ENCODE measurements at regions of chr11 and their contacts with region 1.

Region 1: GRCh38 chr11:10307442-10308207 is 2.8 kb downstream of the ADM start:
- DNase-seq: peak; percentile 80 to 93
- ATAC-seq: peak; percentile 67 to 85 (median 81)
- H3K4me3 ChIP-seq: peak overlapping the region; percentile 44
- H3K4me3 Mint-ChIP-seq: peak overlapping the region; percentile 94
- H3K27ac ChIP-seq: no peak overlapping the region
- H3K27ac Mint-ChIP-seq: peak overlapping the region; percentile 66 to 81
- H3K4me1 ChIP-seq: peaks cover 54% of the 10 kb centered on the region
- H3K4me1 Mint-ChIP-seq: peaks cover 48 to 51% of the 10 kb centered on the region in 2 donors
- H3K27me3 ChIP-seq: peaks cover 37% of the 10 kb centered on the region
- H3K27me3 Mint-ChIP-seq: peaks cover 42% of the 10 kb centered on the region in 2 donors
- CTCF ChIP-seq: peak; percentile 99

Region 2: DNA sequence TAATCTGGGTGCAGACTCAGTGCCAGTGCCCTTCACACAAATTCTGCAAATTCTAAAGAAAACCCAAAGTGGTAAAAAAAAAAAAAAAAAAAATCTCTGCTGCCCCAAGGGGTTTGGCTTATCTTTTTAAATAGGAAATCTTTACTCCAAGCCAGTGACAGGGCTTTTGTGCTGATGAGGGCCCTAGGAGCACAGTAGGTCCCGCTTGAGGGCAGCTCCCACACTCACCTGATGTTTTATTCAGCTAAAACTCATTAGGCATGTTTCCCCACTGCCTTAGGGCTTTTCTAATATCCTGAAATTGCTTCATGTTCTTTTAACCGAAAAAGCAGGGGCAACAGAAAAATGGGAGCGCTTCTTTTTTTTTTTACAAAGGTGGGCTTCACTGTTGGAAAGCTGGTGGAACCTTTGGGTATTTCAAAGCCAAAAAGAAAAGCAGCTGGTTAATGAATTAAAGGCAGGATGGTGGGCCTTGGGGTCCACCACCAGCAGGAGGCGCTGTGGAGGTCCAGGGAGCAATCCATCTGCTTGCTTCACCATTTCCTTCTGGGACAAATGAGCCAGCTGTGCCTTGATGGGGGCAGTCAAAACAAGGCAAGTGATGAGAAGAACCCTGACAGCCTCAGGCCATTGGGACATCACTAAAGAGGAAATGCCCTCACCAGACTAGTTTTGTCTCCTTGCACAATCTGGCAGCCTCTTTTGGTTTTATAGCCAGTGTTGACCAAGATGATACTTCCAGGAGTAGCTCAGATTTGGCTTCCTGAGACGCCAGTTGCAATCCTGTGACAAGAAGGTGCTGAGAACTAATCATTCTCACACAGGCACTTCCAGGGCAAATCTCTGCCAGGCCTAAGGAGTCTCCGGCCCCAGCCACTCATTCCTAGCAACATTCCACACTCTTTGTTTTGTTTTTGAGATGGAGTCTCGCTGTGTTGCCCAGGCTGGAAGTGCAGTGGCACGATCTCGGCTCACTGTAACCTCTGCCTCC is 772.5 kb before region 1 on chr11:
- intact Hi-C with region 1: loop called (anchors 10 kb)
- DNase-seq: peak; percentile 77 to 87
- ATAC-seq: peak; percentile 69 to 84 (median 78)
- H3K4me3 ChIP-seq: no peak overlapping the region
- H3K4me3 Mint-ChIP-seq: no peak overlapping the region
- H3K27ac ChIP-seq: no peak overlapping the region
- H3K27ac Mint-ChIP-seq: no peak overlapping the region
- H3K4me1 ChIP-seq: no peaks in the 10 kb centered on the region
- H3K4me1 Mint-ChIP-seq: no peaks in the 10 kb centered on the region
- H3K27me3 ChIP-seq: no peaks in the 10 kb centered on the region
- H3K27me3 Mint-ChIP-seq: no peaks in the 10 kb centered on the region
- CTCF ChIP-seq: peak; percentile 89

Region 3: GRCh38 chr11:9757809-9758636 is 549.6 kb before region 1 on chr11:
- intact Hi-C with region 1: loop called (anchors 1 kb)
- DNase-seq: peak; percentile 92 to 97
- ATAC-seq: peak; percentile 87 to 96 (median 94)
- H3K4me3 ChIP-seq: peak overlapping the region; percentile 71
- H3K4me3 Mint-ChIP-seq: peak overlapping the region; percentile 87
- H3K27ac ChIP-seq: peak overlapping the region; percentile 58
- H3K27ac Mint-ChIP-seq: peak overlapping the region; percentile 83 to 84
- H3K4me1 ChIP-seq: peaks cover 40% of the 10 kb centered on the region
- H3K4me1 Mint-ChIP-seq: peaks cover 16 to 30% of the 10 kb centered on the region in 2 donors
- H3K27me3 ChIP-seq: no peaks in the 10 kb centered on the region
- H3K27me3 Mint-ChIP-seq: no peaks in the 10 kb centered on the region
- CTCF ChIP-seq: peak; percentile 91

Region 4: DNA sequence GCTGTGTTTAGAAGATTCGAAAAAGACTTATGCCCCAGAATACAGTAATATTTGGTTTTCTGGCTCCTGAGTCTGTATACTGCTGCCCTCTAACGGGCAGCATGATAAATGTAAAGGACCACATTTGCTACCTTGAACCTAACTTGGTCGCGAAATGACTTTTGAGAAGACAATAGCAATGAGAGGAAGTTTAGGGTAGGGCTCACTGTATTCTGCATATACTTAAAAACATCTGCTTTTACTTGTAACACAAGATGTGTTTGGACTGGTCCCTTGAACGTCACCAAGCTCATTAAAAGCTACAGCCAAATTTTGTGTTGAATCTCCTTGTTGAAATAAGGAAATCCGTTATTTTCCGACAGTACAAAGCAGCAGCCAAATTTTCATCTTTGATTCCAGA is 334.6 kb before region 1 on chr11:
- intact Hi-C with region 1: loop called (anchors 5 kb)
- DNase-seq: peak in 1 of 2 donors; percentile 55
- ATAC-seq: peak in 1 of 3 donors; percentile 43
- H3K4me3 ChIP-seq: no peak overlapping the region
- H3K4me3 Mint-ChIP-seq: no peak overlapping the region
- H3K27ac ChIP-seq: no peak overlapping the region
- H3K27ac Mint-ChIP-seq: no peak overlapping the region
- H3K4me1 ChIP-seq: no peaks in the 10 kb centered on the region
- H3K4me1 Mint-ChIP-seq: no peaks in the 10 kb centered on the region
- H3K27me3 ChIP-seq: no peaks in the 10 kb centered on the region
- H3K27me3 Mint-ChIP-seq: no peaks in the 10 kb centered on the region
- CTCF ChIP-seq: peak; percentile 41

Region 5: DNA sequence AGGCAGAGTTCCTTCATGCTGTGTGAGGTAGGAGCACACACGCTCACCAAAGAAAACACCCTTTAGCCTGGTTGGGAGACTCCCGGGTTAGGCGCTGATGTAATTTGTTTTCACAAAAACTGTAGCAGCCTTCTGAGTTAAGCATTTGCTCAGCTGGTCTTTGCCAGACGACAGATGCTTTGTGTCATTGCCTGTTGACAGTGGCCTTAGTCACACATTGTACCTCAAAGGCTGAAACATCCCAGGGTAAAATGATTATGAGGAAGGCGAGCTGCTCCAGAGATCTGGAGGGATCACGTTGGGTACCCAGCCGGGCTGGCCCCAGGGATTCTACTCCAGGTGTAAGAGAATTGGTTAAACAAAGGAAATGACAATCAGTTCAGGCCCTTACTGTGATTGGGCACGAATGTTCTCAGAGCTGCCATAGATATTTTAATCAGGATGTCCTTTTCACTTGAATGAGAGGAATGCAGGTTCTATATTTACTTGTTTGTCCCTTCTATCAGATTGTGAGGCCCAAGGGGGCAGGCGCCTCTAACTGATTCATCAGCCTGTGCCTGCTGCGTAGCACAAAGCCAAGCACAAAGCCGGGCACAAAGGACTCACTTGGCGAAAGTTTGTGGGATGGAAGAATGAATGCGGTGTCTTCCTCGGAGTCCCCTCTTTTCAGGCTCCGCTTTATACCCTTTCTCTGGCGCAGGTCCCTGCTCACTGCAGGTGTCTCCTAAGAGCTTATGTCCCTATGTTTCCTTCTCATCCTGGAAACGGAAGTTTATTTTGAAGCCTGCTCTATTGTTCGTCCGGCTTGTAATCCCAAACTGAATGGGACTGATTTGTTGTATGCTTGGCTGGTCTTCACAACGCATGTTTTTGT is 44.4 kb after region 1 on chr11:
- intact Hi-C with region 1: no loop called
- DNase-seq: no peak
- ATAC-seq: no peak
- H3K4me3 ChIP-seq: no peak overlapping the region
- H3K4me3 Mint-ChIP-seq: no peak overlapping the region
- H3K27ac ChIP-seq: no peak overlapping the region
- H3K27ac Mint-ChIP-seq: no peak overlapping the region
- H3K4me1 ChIP-seq: no peaks in the 10 kb centered on the region
- H3K4me1 Mint-ChIP-seq: no peaks in the 10 kb centered on the region
- H3K27me3 ChIP-seq: no peaks in the 10 kb centered on the region
- H3K27me3 Mint-ChIP-seq: peaks cover 13 to 29% of the 10 kb centered on the region in 2 donors
- CTCF ChIP-seq: no peak

Region 6: GRCh38 chr11:10735481-10736475 is 428.2 kb after region 1 on chr11:
- intact Hi-C with region 1: loop called (anchors 10 kb)
- DNase-seq: peak; percentile 88 to 91
- ATAC-seq: peak; percentile 100
- H3K4me3 ChIP-seq: no peak overlapping the region
- H3K4me3 Mint-ChIP-seq: peak overlapping the region; percentile 40
- H3K27ac ChIP-seq: no peak overlapping the region
- H3K27ac Mint-ChIP-seq: peak overlapping the region in 1 of 2 donors; percentile 81
- H3K4me1 ChIP-seq: peaks cover 7% of the 10 kb centered on the region
- H3K4me1 Mint-ChIP-seq: peaks cover 6 to 12% of the 10 kb centered on the region in 2 donors
- H3K27me3 ChIP-seq: no peaks in the 10 kb centered on the region
- H3K27me3 Mint-ChIP-seq: peaks cover 10 to 12% of the 10 kb centered on the region in 2 donors
- CTCF ChIP-seq: peak; percentile 98